Activated T-helper 1 cell treated with anti-CD3 and anti-CD28 coated beads, Interleukin-12 subunit alpha, Interleukin-12 subunit beta, Interleukin-2, Interleukin-4 antibody, amounts not matched to agents 30 ng/mL and 10 ng/mL and 1 ng/mL, durations not matched to agents 14 hours and 24 hours and 36 hours (primary cell): ENCODE measurements at regions of chrX and their contacts with region 1.

Region 1: GRCh38 chrX:40647307-40648197 is at the start of gene CXorf38:
- DNase-seq: peak; percentile 85
- H3K4me3 Mint-ChIP-seq: peak within 1 kb of the TSS; percentile 97
- H3K27ac Mint-ChIP-seq: peak within 1 kb of the TSS; percentile 94
- H3K4me1 Mint-ChIP-seq: peaks cover 28% of the 10 kb centered on the region
- H3K27me3 Mint-ChIP-seq: no peaks in the 10 kb centered on the region
- total RNA-seq, gene CXorf38: 15.7 and 16.9 TPM in 2 replicates

Region 2: DNA sequence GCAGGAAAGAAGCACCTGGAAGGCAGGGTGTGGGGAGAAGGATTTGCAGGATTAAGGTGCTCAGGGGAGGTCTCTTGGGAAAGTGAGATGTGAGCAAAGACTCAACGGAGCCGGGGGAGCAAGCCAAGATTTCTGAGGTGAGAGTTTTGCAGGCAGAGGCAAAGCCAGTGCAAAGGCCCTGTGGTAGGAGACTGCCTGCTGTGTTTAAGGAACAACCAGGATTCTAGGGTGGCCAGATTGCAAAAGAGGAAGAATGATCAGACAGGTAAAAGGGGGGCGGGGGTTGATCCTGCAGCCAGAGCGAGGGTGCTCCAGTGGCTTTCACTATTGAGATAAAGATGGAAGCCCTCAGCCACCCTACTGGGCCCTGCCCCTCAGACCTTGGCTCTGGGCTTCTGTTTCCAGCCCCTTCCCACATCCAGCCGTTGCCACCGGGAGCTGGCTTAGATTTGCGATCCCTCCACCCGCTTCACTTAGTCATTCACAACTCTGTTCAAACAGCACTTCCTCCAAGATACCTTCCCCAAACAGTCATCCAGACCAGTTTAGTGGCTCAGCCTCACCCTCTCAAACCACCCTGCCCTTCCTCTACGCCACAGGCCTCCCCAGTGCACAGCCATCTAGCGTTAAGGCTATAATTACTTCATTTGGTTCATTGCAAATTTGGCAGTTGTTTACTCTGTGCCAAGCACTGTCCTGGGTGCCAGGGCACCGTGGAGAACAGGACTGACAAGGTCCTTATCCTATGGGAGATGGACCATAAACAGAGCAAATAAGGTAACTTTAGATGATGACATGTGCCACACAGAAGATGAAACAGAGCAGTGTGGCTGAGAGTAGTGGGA is 526.5 kb before region 1 on chrX:
- intact Hi-C with region 1: no loop called
- DNase-seq: no peak
- H3K4me3 Mint-ChIP-seq: no peak overlapping the region
- H3K27ac Mint-ChIP-seq: no peak overlapping the region
- H3K4me1 Mint-ChIP-seq: no peaks in the 10 kb centered on the region
- H3K27me3 Mint-ChIP-seq: no peaks in the 10 kb centered on the region

Region 3: GRCh38 chrX:40580537-40581335 is 66.8 kb before region 1 on chrX and contains the start of gene ATP6AP2:
- intact Hi-C with region 1: loop called (anchors 1 kb)
- DNase-seq: peak; percentile 85
- H3K4me3 Mint-ChIP-seq: peak within 1 kb of the TSS; percentile 94
- H3K27ac Mint-ChIP-seq: peak within 1 kb of the TSS; percentile 97
- H3K4me1 Mint-ChIP-seq: peaks cover 17% of the 10 kb centered on the region
- H3K27me3 Mint-ChIP-seq: no peaks in the 10 kb centered on the region
- total RNA-seq, gene ATP6AP2: 65.4 and 67.1 TPM in 2 replicates

Region 4: GRCh38 chrX:40700640-40701342 is 53.2 kb after region 1 on chrX:
- intact Hi-C with region 1: no loop called
- DNase-seq: no peak
- H3K4me3 Mint-ChIP-seq: no peak overlapping the region
- H3K27ac Mint-ChIP-seq: no peak overlapping the region
- H3K4me1 Mint-ChIP-seq: peaks cover under 1% of the 10 kb centered on the region
- H3K27me3 Mint-ChIP-seq: no peaks in the 10 kb centered on the region

Region 5: DNA sequence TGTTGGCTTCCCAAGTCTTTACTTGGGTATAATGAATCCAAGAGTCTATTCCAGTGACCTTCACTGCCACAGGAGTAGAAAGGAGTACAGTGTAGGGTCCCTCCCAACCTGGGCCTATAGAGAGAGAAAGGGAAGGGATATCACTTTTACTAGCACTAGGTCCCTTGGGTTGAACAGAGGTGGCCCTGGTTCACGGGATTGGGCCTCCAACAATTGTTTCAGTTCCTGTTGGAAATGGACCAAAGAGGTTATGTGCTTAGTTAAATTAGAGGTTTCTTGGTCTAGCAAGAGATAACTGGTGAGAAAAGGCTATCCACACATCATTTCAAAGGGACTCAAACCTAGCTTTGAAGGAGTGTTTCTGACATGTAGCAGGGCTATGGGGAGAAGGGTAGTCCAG is 144.9 kb after region 1 on chrX:
- intact Hi-C with region 1: loop called (anchors 1 kb)
- DNase-seq: no peak
- H3K4me3 Mint-ChIP-seq: no peak overlapping the region
- H3K27ac Mint-ChIP-seq: no peak overlapping the region
- H3K4me1 Mint-ChIP-seq: no peaks in the 10 kb centered on the region
- H3K27me3 Mint-ChIP-seq: no peaks in the 10 kb centered on the region

Region 6: DNA sequence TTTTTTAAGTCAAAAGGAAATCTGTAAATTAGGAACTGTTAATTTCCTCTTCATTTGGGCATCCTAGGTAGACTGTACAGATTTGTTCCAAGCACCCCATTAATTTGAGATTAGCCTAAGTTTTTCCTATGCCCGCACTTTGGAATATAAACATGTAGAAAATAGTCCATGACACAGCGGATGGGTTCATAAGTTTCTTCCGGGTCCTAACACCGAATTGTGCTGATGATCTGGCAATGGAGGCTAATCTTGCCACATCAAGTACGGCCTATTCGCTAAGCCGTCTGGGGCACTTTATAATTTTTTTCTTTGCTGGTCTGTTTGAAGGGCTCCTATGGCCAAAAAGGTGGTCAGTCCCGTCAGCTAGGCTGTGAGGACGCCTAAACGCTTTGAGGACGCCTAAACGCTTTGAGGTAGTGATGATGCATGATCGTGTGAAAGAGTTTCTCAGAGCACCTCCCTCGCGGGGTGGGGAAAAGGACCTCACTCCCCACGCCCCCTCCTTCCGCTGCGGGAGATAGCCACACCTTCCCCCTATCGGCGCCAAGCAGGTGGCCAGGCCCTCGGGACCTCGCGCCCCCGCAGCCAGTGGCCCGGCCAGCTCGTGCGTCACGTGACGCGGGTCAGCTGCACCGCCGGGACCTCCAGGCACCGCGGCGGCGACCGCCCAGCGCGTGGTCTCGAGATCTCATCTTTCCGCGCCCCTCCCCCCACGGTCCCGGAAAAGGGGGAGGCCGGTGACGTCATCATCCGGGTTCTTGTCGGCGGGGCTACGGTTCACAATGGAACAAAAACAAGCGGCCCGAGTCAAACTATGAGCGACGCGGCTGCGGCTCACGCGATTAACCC is 436.7 kb after region 1 on chrX:
- intact Hi-C with region 1: loop called (anchors 2 kb)
- DNase-seq: peak; percentile 85
- H3K4me3 Mint-ChIP-seq: peak overlapping the region; percentile 90
- H3K27ac Mint-ChIP-seq: peak overlapping the region; percentile 99
- H3K4me1 Mint-ChIP-seq: peaks cover 12% of the 10 kb centered on the region
- H3K27me3 Mint-ChIP-seq: no peaks in the 10 kb centered on the region

Region 7: GRCh38 chrX:41258226-41258625 is 610.7 kb after region 1 on chrX:
- intact Hi-C with region 1: loop called (anchors 2 kb)
- DNase-seq: no peak
- H3K4me3 Mint-ChIP-seq: no peak overlapping the region
- H3K27ac Mint-ChIP-seq: no peak overlapping the region
- H3K4me1 Mint-ChIP-seq: peaks cover 4% of the 10 kb centered on the region
- H3K27me3 Mint-ChIP-seq: peaks cover 6% of the 10 kb centered on the region